CD4-positive, alpha-beta T cell (primary cell): ENCODE measurements at regions of chr1 and their contacts with region 1.

Region 1: GRCh38 chr1:229625915-229626831 is at the starts of genes TAF5L and URB2:
- DNase-seq: peak; percentile 63 to 94 (median 78)
- ATAC-seq: peak; percentile 91
- H3K4me3 ChIP-seq: peak within 1 kb of the TSS; percentile 93
- H3K4me3 Mint-ChIP-seq: peak within 1 kb of the TSS; percentile 99
- H3K27ac ChIP-seq: peak within 1 kb of the TSS; percentile 67 to 76
- H3K27ac Mint-ChIP-seq: peak within 1 kb of the TSS; percentile 91
- H3K4me1 ChIP-seq: peaks cover 26% of the 10 kb centered on the region
- H3K4me1 Mint-ChIP-seq: peaks cover 62% of the 10 kb centered on the region
- H3K27me3 ChIP-seq: no peaks in the 10 kb centered on the region
- H3K27me3 Mint-ChIP-seq: no peaks in the 10 kb centered on the region
- CTCF ChIP-seq: no peak
- total RNA-seq, gene TAF5L: 19.5 to 21.9 TPM
- total RNA-seq, gene URB2: 4.1 to 4.2 TPM

Region 2: GRCh38 chr1:227787513-227788270 is 1838.5 kb before region 1 on chr1:
- CTCF ChIA-PET with region 1: no interaction called
- POLR2A ChIA-PET with region 1: no interaction called
- intact Hi-C with region 1: loop called in 1 of 2 experiments (anchors 5 kb)
- DNase-seq: peak; percentile 94 to 99 (median 96)
- ATAC-seq: peak; percentile 92
- H3K4me3 ChIP-seq: peak overlapping the region; percentile 74
- H3K4me3 Mint-ChIP-seq: peak overlapping the region; percentile 89
- H3K27ac ChIP-seq: peak overlapping the region in 1 of 2 donors; percentile 11
- H3K27ac Mint-ChIP-seq: peak overlapping the region; percentile 82
- H3K4me1 ChIP-seq: peaks cover 39% of the 10 kb centered on the region
- H3K4me1 Mint-ChIP-seq: peaks cover 34% of the 10 kb centered on the region
- H3K27me3 ChIP-seq: no peaks in the 10 kb centered on the region
- H3K27me3 Mint-ChIP-seq: no peaks in the 10 kb centered on the region
- CTCF ChIP-seq: no peak

Region 3: DNA sequence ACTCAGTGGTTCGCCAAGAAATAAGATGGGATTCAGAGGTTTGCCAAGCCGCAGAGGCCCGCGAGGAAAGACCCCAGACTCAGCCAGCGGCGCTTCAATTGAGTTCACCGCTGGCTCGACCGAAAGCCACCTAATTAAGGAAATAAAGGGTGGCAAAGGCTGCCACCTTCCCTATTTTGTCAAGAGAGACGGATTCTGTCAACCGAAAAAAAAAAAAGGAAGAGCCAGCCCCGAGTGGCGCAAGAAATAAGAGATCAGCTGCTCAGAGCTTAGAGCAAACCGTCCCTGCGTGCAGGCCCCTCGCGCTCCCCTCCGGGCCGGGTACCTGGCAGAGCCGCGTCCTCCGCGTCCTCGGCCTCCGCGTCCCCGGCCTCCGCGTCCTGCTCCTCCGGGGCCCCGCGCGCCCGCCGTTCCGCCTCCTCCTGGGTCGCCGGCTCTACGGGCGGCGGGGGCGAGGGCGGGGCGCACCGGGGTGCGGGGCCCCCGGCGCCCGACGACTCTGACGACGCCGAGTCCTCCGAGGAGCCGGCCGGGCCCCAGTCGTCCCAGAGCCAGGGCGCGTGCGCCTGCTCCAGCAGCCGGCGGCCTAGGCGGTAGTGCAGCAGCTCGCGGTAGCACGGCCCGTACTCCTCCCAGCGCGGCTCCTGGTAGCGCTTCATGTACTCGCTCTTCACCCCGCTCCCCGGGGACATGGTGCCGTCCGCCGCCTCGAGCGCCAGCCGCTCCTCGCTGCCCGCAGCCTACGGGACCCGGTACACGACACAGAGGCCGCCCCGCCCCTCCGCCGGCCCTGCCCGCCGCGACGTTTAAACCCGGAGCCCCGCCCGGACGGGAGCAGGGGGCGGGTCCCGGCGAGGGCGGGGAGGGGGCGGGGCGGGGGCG is 284.2 kb before region 1 on chr1:
- CTCF ChIA-PET with region 1: no interaction called
- POLR2A ChIA-PET with region 1: interaction called, 3 read pairs
- intact Hi-C with region 1: loop called in 1 of 2 experiments (anchors 2 kb)
- DNase-seq: peak in 13 of 14 experiments; percentile 67 to 92 (median 78)
- ATAC-seq: peak; percentile 76
- H3K4me3 ChIP-seq: peak overlapping the region; percentile 73
- H3K4me3 Mint-ChIP-seq: peak overlapping the region; percentile 97
- H3K27ac ChIP-seq: peak overlapping the region in 1 of 2 donors; percentile 29
- H3K27ac Mint-ChIP-seq: peak overlapping the region; percentile 91
- H3K4me1 ChIP-seq: peaks cover 41% of the 10 kb centered on the region
- H3K4me1 Mint-ChIP-seq: peaks cover 50% of the 10 kb centered on the region
- H3K27me3 ChIP-seq: no peaks in the 10 kb centered on the region
- H3K27me3 Mint-ChIP-seq: peaks cover 12% of the 10 kb centered on the region
- CTCF ChIP-seq: no peak

Region 4: GRCh38 chr1:229547542-229547941 is 78.6 kb before region 1 on chr1:
- CTCF ChIA-PET with region 1: no interaction called
- POLR2A ChIA-PET with region 1: no interaction called
- intact Hi-C with region 1: no loop called
- DNase-seq: no peak
- ATAC-seq: no peak
- H3K4me3 ChIP-seq: no peak overlapping the region
- H3K4me3 Mint-ChIP-seq: no peak overlapping the region
- H3K27ac ChIP-seq: no peak overlapping the region
- H3K27ac Mint-ChIP-seq: no peak overlapping the region
- H3K4me1 ChIP-seq: peaks cover 1% of the 10 kb centered on the region
- H3K4me1 Mint-ChIP-seq: peaks cover 23% of the 10 kb centered on the region
- H3K27me3 ChIP-seq: no peaks in the 10 kb centered on the region
- H3K27me3 Mint-ChIP-seq: no peaks in the 10 kb centered on the region
- CTCF ChIP-seq: no peak

Region 5: DNA sequence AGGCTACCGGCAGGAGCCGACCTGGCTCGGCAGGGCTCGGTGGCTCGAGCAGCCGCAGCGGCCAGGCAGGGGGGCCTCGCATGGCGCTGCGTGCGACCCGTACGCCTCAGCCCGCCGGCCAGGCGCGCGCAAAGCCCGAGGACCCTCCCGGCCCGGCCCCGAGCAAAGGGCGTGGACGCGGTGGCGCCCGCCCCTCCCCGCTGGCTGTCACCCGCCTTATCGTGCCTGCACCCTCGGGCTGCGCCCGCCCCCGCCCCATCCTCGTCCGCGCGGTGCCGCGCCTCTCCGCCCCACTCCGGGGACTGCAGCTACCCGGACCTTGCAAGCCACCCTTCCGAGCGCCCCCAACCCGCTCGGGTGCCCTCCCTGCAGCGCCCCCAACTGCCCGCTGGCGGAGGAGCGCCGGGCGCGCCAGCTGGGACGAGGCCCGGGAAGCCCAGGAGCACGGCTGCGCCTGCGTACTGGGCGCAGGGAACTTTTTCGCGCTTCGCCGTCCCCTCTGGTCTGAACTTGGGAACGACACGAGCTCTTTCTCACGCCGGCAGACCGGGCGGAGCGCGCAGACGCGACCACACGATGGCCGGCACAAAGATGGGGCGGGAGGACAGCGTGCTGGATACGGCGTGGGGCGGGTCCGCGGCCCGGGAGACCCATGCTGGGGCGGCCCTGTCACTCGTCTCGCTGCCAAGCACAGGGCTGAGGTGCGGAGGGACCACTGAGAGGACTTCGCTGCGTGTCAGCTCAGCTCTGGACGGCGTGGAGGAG is 67.4 kb before region 1 on chr1 and contains the start of gene ABCB10:
- CTCF ChIA-PET with region 1: interaction called, 29 read pairs
- POLR2A ChIA-PET with region 1: interaction called, 85 read pairs
- intact Hi-C with region 1: loop called (anchors 1 to 5 kb)
- DNase-seq: peak; percentile 68 to 94 (median 84)
- ATAC-seq: peak; percentile 76
- H3K4me3 ChIP-seq: peak within 1 kb of the TSS; percentile 75
- H3K4me3 Mint-ChIP-seq: peak within 1 kb of the TSS; percentile 93
- H3K27ac ChIP-seq: peak within 1 kb of the TSS; percentile 35 to 61
- H3K27ac Mint-ChIP-seq: peak within 1 kb of the TSS; percentile 92
- H3K4me1 ChIP-seq: peaks cover 37% of the 10 kb centered on the region
- H3K4me1 Mint-ChIP-seq: peaks cover 44% of the 10 kb centered on the region
- H3K27me3 ChIP-seq: no peaks in the 10 kb centered on the region
- H3K27me3 Mint-ChIP-seq: no peaks in the 10 kb centered on the region
- CTCF ChIP-seq: peak; percentile 54
- total RNA-seq, gene ABCB10: 9.8 to 11.0 TPM

Region 6: GRCh38 chr1:229768217-229768616 is 142.0 kb after region 1 on chr1:
- CTCF ChIA-PET with region 1: no interaction called
- POLR2A ChIA-PET with region 1: no interaction called
- intact Hi-C with region 1: no loop called
- DNase-seq: no peak
- ATAC-seq: no peak
- H3K4me3 ChIP-seq: no peak overlapping the region
- H3K4me3 Mint-ChIP-seq: no peak overlapping the region
- H3K27ac ChIP-seq: no peak overlapping the region
- H3K27ac Mint-ChIP-seq: no peak overlapping the region
- H3K4me1 ChIP-seq: no peaks in the 10 kb centered on the region
- H3K4me1 Mint-ChIP-seq: no peaks in the 10 kb centered on the region
- H3K27me3 ChIP-seq: peaks cover 0 to 5% of the 10 kb centered on the region in 2 experiments
- H3K27me3 Mint-ChIP-seq: peaks cover 15% of the 10 kb centered on the region
- CTCF ChIP-seq: no peak

Region 7: GRCh38 chr1:229940684-229941083 is 314.5 kb after region 1 on chr1:
- CTCF ChIA-PET with region 1: no interaction called
- POLR2A ChIA-PET with region 1: no interaction called
- intact Hi-C with region 1: no loop called
- DNase-seq: no peak
- ATAC-seq: no peak
- H3K4me3 ChIP-seq: no peak overlapping the region
- H3K4me3 Mint-ChIP-seq: no peak overlapping the region
- H3K27ac ChIP-seq: no peak overlapping the region
- H3K27ac Mint-ChIP-seq: no peak overlapping the region
- H3K4me1 ChIP-seq: no peaks in the 10 kb centered on the region
- H3K4me1 Mint-ChIP-seq: no peaks in the 10 kb centered on the region
- H3K27me3 ChIP-seq: peaks cover 5 to 6% of the 10 kb centered on the region in 2 experiments
- H3K27me3 Mint-ChIP-seq: no peaks in the 10 kb centered on the region
- CTCF ChIP-seq: no peak

Region 8: GRCh38 chr1:231528172-231529029 is 1902.2 kb after region 1 on chr1 and contains the start of gene TSNAX:
- CTCF ChIA-PET with region 1: no interaction called
- POLR2A ChIA-PET with region 1: no interaction called
- intact Hi-C with region 1: loop called in 1 of 2 experiments (anchors 2 kb)
- DNase-seq: peak; percentile 81 to 96 (median 88)
- ATAC-seq: peak; percentile 85
- H3K4me3 ChIP-seq: peak within 1 kb of the TSS; percentile 70
- H3K4me3 Mint-ChIP-seq: peak within 1 kb of the TSS; percentile 94
- H3K27ac ChIP-seq: peak within 1 kb of the TSS; percentile 84 to 89
- H3K27ac Mint-ChIP-seq: peak within 1 kb of the TSS; percentile 97
- H3K4me1 ChIP-seq: peaks cover 38% of the 10 kb centered on the region
- H3K4me1 Mint-ChIP-seq: peaks cover 46% of the 10 kb centered on the region
- H3K27me3 ChIP-seq: no peaks in the 10 kb centered on the region
- H3K27me3 Mint-ChIP-seq: no peaks in the 10 kb centered on the region
- CTCF ChIP-seq: no peak
- total RNA-seq, gene TSNAX: 33.5 to 35.7 TPM